Mammary epithelial cell (primary cell): ENCODE measurements at regions of chr13 and their contacts with region 1.

Region 1: DNA sequence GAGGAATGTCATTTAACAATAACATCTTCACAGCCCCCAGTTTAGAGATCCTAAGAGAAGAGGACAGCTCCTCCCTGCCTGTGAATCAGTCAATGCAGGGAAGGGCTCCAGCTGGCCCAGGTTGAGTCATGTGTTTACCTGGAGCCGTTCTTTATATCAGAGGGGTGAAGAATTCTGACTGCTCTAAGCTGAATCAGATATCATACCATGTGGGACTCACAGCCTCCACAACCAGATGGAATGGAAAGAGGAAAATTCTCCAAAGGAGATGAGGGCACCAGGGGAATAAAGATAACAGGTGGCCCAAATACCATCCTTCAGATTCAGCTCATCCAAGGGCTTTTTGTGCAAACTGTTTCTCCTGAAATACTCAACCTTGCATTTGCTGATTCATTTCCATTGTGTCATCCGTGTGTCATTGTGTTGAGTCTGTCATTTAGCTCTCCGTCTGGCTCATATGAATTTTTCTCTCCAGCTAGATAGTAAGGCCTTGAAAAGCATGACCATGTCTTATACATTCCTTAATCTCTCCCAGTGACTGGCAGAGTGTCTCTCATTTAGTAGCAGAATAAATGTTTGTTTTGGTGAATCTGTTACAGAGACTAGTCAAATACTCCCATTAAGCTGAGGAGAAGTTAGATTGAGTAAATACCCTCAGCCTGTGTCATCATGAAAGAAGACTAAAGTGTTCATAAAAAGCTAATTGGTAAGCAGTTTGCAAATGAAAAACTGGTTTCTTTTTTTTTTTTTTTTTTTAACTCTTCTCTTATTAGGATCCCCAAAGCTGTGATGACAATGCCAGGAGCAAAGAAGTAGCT is 217.9 kb downstream of the RFC3 start:
- DNase-seq: peak; percentile 86
- H3K4me3 ChIP-seq: no peak overlapping the region
- H3K27ac ChIP-seq: peak overlapping the region; percentile 70
- H3K4me1 ChIP-seq: peaks cover 31% of the 10 kb centered on the region
- H3K27me3 ChIP-seq: no peaks in the 10 kb centered on the region
- CTCF ChIP-seq: no peak

Region 2: GRCh38 chr13:33799950-33800592 is 235.8 kb before region 1 on chr13:
- CTCF ChIA-PET with region 1: no interaction called
- dilution Hi-C with region 1: no loop called
- in situ Hi-C with region 1: no loop called
- intact Hi-C with region 1: no loop called
- DNase-seq: peak; percentile 11
- H3K4me3 ChIP-seq: no peak overlapping the region
- H3K27ac ChIP-seq: no peak overlapping the region
- H3K4me1 ChIP-seq: peaks cover 8% of the 10 kb centered on the region
- H3K27me3 ChIP-seq: no peaks in the 10 kb centered on the region
- CTCF ChIP-seq: peak; percentile 48 to 55

Region 3: DNA sequence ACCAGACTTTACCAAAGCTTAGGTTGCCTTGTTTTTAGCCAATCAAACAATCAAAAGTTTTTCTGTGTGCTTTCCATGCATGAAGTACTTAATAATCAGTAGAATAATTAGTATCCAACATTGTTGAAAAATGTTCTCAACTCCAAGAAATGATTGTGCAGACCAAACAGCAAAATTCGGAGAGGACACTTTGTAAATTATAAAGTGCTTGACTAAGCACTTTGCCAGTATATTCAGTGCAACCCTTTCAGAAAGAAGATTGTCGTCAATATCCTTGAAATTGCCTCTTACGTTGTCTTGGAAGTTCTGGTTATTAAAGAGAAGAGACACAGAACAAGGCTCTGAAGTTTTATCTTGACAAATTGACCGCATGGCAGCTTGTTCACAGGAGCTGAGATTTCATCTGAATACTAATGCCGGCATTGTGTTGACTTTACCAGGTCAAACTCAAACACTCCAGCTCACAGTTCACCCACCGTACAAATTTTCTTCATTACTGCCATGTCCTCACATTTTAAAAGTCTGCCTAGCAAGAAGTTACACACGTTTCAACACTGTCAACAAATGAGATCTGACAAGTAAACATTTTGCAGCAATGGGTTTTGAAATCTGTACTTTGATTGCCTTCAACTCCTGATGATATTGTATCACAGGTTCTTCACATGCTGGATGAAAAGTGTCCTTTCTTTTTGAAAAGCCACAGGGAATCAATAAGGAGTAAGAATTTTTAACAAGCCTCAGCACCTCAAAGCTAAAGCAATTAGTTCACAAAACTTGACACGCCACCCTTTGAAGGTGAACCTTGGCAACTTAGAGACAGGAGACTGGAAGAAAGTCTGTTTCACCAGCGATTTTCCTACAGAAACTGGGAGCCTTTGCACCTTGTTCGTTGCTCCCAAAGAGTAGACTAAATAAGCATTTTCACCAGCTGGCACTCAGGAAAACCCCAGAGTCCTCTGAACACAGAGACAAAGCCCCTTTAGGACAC is 67.1 kb before region 1 on chr13:
- CTCF ChIA-PET with region 1: interaction called, 12 read pairs
- dilution Hi-C with region 1: no loop called
- in situ Hi-C with region 1: no loop called
- intact Hi-C with region 1: no loop called
- DNase-seq: no peak
- H3K4me3 ChIP-seq: no peak overlapping the region
- H3K27ac ChIP-seq: no peak overlapping the region
- H3K4me1 ChIP-seq: no peaks in the 10 kb centered on the region
- H3K27me3 ChIP-seq: no peaks in the 10 kb centered on the region
- CTCF ChIP-seq: no peak